ENCODE measurements at regions of chr16 and their contacts with region 1.

Region 1: GRCh38 chr16:85126705-85127419 is 14.6 kb upstream of the CIBAR2 start:
- DNase-seq: peak; percentile 80 to 91
- ATAC-seq: peak; percentile 74 to 87 (median 80)
- H3K4me3 ChIP-seq: peak overlapping the region; percentile 33
- H3K27ac ChIP-seq: peak overlapping the region; percentile 93
- H3K4me1 ChIP-seq: peaks cover 53% of the 10 kb centered on the region
- H3K27me3 ChIP-seq: no peaks in the 10 kb centered on the region
- CTCF ChIP-seq: no peak

Region 2: GRCh38 chr16:85151603-85152413 is 24.9 kb after region 1 on chr16:
- intact Hi-C with region 1: loop called in 1 of 2 experiments (anchors 2 kb)
- DNase-seq: peak; percentile 80 to 86
- ATAC-seq: peak; percentile 31 to 58 (median 42)
- H3K4me3 ChIP-seq: no peak overlapping the region
- H3K27ac ChIP-seq: peak overlapping the region; percentile 97
- H3K4me1 ChIP-seq: peaks cover 61% of the 10 kb centered on the region
- H3K27me3 ChIP-seq: no peaks in the 10 kb centered on the region
- CTCF ChIP-seq: no peak

Region 3: GRCh38 chr16:85162478-85163277 is 35.8 kb after region 1 on chr16:
- intact Hi-C with region 1: loop called in 1 of 2 experiments (anchors 5 kb)
- DNase-seq: peak; percentile 82 to 89
- ATAC-seq: peak; percentile 84 to 87 (median 85)
- H3K4me3 ChIP-seq: peak overlapping the region; percentile 6
- H3K27ac ChIP-seq: peak overlapping the region; percentile 86
- H3K4me1 ChIP-seq: peaks cover 81% of the 10 kb centered on the region
- H3K27me3 ChIP-seq: no peaks in the 10 kb centered on the region
- CTCF ChIP-seq: no peak

Measured in psoas muscle (tissue), 8 donors.